Endothelial cell of umbilical vein (primary cell): ENCODE measurements at regions of chr18 and their contacts with region 1.

Region 1: GRCh38 chr18:3281456-3282400 is 19.8 kb downstream of the MYL12B start:
- DNase-seq: peak; percentile 91
- H3K4me3 ChIP-seq: no peak overlapping the region
- H3K27ac ChIP-seq: peak overlapping the region; percentile 84
- H3K4me1 ChIP-seq: peaks cover 38% of the 10 kb centered on the region
- H3K27me3 ChIP-seq: no peaks in the 10 kb centered on the region
- CTCF ChIP-seq: peak; percentile 6 to 21
- POLR2A ChIP-seq: no peak

Region 2: GRCh38 chr18:3297025-3297984 is 15.6 kb after region 1 on chr18:
- CTCF ChIA-PET with region 1: interaction called, 23 read pairs
- POLR2A ChIA-PET with region 1: no interaction called
- dilution Hi-C with region 1: no loop called
- intact Hi-C with region 1: no loop called
- DNase-seq: peak; percentile 57
- H3K4me3 ChIP-seq: peak overlapping the region in 2 of 3 experiments; percentile 53 to 54
- H3K27ac ChIP-seq: no peak overlapping the region
- H3K4me1 ChIP-seq: no peaks in the 10 kb centered on the region
- H3K27me3 ChIP-seq: peaks cover 0 to 10% of the 10 kb centered on the region in 2 experiments
- CTCF ChIP-seq: peak; percentile 64 to 67
- POLR2A ChIP-seq: no peak

Region 3: DNA sequence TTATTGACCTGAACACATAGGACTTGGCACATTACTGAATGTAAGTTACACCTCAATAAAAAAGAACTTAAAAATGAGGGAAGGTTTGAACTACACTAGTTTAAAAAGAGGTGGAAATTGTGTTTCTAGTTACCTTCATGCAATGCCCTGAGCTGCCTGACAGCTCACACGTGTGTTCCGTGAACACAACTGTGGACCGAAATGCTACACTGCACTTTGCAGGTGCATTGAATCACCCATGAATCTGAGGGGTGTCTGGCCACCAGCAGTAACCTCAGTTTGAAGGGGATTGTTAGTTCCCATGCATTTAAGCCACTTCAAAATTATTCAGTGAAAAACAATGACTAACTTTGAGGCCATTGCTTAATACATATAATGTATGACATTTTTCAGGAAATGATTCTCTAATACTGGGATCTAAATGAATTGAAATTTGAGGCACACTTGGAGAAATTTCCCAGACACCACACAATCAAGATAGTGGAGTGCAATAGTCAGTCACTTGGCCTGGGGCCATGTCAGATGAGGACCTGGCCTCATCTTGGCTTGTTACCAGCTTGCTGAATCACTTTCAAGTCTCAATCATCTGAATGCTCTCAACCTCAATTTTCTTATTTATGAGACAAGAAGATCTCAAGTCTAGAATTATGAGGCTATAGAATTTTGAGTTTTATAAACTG is 39.5 kb after region 1 on chr18:
- CTCF ChIA-PET with region 1: interaction called, 4 read pairs
- POLR2A ChIA-PET with region 1: no interaction called
- dilution Hi-C with region 1: no loop called
- intact Hi-C with region 1: loop called (anchors 2 kb)
- DNase-seq: peak; percentile 94
- H3K4me3 ChIP-seq: no peak overlapping the region
- H3K27ac ChIP-seq: peak overlapping the region; percentile 49
- H3K4me1 ChIP-seq: peaks cover 33% of the 10 kb centered on the region
- H3K27me3 ChIP-seq: no peaks in the 10 kb centered on the region
- CTCF ChIP-seq: no peak
- POLR2A ChIP-seq: no peak

Region 4: DNA sequence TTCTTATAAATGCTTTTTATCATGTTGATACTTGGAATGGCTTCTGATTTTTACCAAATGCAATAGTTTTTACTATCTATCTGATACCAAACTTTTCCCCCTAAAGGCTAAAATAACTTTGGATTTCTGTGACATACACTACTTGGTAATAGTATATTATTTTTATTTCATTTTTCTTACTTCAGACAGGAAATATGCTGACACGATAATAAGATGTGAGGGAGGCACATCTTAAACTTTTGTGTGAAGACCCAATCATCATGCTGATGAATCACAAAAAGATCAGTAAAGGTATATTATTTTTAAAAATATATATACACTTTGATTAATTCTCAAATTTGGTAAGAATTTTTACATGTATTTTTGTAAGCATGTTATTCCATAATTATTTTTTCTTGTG is 291.0 kb after region 1 on chr18:
- CTCF ChIA-PET with region 1: no interaction called
- POLR2A ChIA-PET with region 1: no interaction called
- dilution Hi-C with region 1: no loop called
- intact Hi-C with region 1: no loop called
- DNase-seq: no peak
- H3K4me3 ChIP-seq: no peak overlapping the region
- H3K27ac ChIP-seq: no peak overlapping the region
- H3K4me1 ChIP-seq: no peaks in the 10 kb centered on the region
- H3K27me3 ChIP-seq: no peaks in the 10 kb centered on the region
- CTCF ChIP-seq: no peak
- POLR2A ChIP-seq: no peak